Right cardiac atrium (tissue), 5 donors: ENCODE measurements at regions of chr2 and their contacts with region 1.

Region 1: DNA sequence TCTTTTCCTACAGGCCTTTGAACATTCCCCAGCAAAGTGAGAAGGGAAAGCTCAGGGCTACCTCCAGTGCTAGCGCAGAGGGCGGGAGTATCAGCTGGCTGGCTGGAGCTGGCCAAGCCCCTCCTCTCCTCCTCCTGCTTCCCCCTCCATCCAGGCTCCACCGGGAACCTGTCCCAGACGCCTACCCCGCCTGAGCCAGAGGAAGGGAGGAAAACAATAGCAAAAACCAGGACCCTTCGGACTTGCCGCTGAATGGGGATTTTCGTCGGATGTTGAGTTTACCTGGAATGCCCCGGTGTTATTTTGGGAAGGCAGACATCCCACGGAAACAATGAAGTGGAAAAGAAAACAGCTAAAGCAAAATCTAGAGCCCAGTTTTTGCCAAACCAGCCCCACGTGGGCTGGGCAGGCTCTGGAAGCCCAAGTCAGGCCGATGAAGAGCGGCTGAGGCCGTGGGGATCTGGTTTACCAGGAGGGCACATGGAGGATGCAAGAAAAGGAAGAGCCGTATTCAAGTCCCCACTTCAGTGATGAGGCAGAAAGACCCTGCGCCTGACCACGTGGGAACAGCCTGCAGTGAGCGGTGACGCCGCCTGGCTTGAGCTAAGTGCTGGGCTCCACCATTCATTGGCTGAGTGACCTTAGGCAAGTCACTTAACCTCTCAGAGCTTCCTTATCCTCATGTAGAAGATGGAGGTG is 100.4 kb upstream of the LCLAT1 start:
- DNase-seq: peak; percentile 75 to 91 (median 89)
- ATAC-seq: peak; percentile 97 to 98
- H3K4me3 ChIP-seq: peak overlapping the region; percentile 37
- H3K27ac ChIP-seq: peak overlapping the region; percentile 79
- H3K4me1 ChIP-seq: peaks cover 15% of the 10 kb centered on the region
- H3K27me3 ChIP-seq: no peaks in the 10 kb centered on the region

Region 2: GRCh38 chr2:30239308-30239985 is 107.2 kb before region 1 on chr2:
- intact Hi-C with region 1: loop called (anchors 5 to 10 kb)
- DNase-seq: peak; percentile 76 to 89 (median 86)
- ATAC-seq: peak; percentile 81 to 84
- H3K4me3 ChIP-seq: no peak overlapping the region
- H3K27ac ChIP-seq: peak overlapping the region; percentile 51
- H3K4me1 ChIP-seq: peaks cover 14% of the 10 kb centered on the region
- H3K27me3 ChIP-seq: no peaks in the 10 kb centered on the region

Region 3: DNA sequence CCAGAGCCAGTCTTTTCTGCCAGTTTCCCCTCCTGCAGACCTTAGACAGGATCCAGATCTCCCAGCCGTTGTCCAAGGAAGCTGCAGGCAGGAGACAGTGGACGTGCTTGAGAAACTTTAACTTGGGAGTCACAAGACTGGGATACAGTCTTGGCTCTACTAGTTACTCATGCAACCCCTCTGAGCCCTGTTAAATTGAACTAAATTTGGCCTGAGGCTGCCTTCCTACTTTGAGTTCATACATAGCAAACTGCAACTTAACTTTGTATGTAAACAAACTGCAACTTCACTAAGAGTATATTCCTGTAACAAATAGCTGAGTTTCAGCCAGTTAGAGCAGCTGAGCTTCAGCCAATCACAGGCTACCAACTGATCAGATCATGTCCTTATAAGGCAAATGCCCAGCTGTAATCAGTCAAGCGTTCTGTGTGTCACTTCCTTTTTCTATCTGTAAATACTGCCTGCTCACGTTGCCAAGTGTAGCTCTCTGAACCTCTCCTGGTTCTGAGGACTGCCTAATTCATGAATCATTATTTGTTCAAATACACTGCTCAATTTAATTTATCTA is 319.8 kb after region 1 on chr2:
- intact Hi-C with region 1: no loop called
- DNase-seq: no peak
- ATAC-seq: peak; percentile 41 to 55
- H3K4me3 ChIP-seq: no peak overlapping the region
- H3K27ac ChIP-seq: no peak overlapping the region
- H3K4me1 ChIP-seq: no peaks in the 10 kb centered on the region
- H3K27me3 ChIP-seq: no peaks in the 10 kb centered on the region